Heart left ventricle (tissue), 16 donors: ENCODE measurements at regions of chr11 and their contacts with region 1.

Region 1: GRCh38 chr11:41486424-41486823 is 27.0 kb upstream of the LRRC4C start:
- DNase-seq: no peak
- ATAC-seq: no peak
- H3K4me3 ChIP-seq: no peak overlapping the region
- H3K27ac ChIP-seq: no peak overlapping the region
- H3K4me1 ChIP-seq: no peaks in the 10 kb centered on the region
- H3K27me3 ChIP-seq: no peaks in the 10 kb centered on the region
- CTCF ChIP-seq: no peak
- POLR2A ChIP-seq: no peak

Region 2: GRCh38 chr11:40679276-40679675 is 807.1 kb before region 1 on chr11:
- intact Hi-C with region 1: loop called in 1 of 10 experiments (anchors 5 kb)
- DNase-seq: no peak
- ATAC-seq: no peak
- H3K4me3 ChIP-seq: no peak overlapping the region
- H3K27ac ChIP-seq: no peak overlapping the region
- H3K4me1 ChIP-seq: no peaks in the 10 kb centered on the region
- H3K27me3 ChIP-seq: no peaks in the 10 kb centered on the region
- CTCF ChIP-seq: no peak
- POLR2A ChIP-seq: no peak

Region 3: DNA sequence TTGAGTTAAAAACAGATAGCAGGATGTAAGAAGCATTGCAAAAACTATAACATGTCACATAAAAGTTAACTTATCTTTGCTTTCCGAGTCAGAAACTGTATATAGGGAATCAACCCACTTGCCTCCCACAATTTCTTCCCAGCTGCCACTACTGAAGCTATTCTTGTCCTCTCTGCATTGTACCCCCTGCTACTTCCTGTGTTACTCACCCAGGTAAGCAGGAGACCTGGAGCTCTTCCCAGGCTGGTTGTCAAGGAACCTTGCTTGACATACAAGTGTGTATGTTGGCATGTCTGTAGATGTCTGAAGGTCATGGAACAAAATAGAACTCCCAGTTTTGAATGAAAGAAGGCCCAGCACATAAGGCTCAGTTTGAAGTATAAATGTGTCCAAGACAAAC is 47.3 kb after region 1 on chr11:
- intact Hi-C with region 1: no loop called
- DNase-seq: no peak
- ATAC-seq: no peak
- H3K4me3 ChIP-seq: no peak overlapping the region
- H3K27ac ChIP-seq: no peak overlapping the region
- H3K4me1 ChIP-seq: no peaks in the 10 kb centered on the region
- H3K27me3 ChIP-seq: no peaks in the 10 kb centered on the region
- CTCF ChIP-seq: no peak
- POLR2A ChIP-seq: no peak